Right lobe of liver (tissue), 6 donors: ENCODE measurements at regions of chr2 and their contacts with region 1.

Region 1: DNA sequence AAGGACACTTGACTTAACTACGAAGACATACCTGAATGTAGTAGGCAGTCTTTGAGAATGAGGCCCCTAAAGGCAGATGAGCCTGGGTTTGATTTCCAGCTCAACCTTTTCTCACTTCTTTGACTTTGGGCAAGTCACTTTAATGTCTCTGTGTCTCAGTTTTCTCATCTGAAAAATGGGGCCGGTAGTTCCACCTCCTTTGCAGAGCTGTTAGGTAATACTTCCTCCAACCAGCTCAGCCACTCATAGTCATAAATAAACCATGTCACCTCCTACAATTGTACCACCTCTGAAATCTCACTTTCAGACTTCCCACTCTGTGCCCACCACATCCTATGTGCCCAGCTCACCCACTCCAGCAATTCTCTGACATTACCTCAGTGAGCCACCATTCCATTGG is 10.4 kb downstream of the ARHGAP25 start:
- DNase-seq: no peak
- ATAC-seq: no peak
- H3K4me3 ChIP-seq: no peak overlapping the region
- H3K27ac ChIP-seq: no peak overlapping the region
- H3K4me1 ChIP-seq: no peaks in the 10 kb centered on the region
- H3K27me3 ChIP-seq: no peaks in the 10 kb centered on the region
- CTCF ChIP-seq: no peak
- POLR2A ChIP-seq: no peak

Region 2: GRCh38 chr2:68565858-68566257 is 179.1 kb before region 1 on chr2:
- intact Hi-C with region 1: no loop called
- DNase-seq: no peak
- ATAC-seq: no peak
- H3K4me3 ChIP-seq: no peak overlapping the region
- H3K27ac ChIP-seq: no peak overlapping the region
- H3K4me1 ChIP-seq: no peaks in the 10 kb centered on the region
- H3K27me3 ChIP-seq: no peaks in the 10 kb centered on the region
- CTCF ChIP-seq: no peak
- POLR2A ChIP-seq: no peak

Region 3: DNA sequence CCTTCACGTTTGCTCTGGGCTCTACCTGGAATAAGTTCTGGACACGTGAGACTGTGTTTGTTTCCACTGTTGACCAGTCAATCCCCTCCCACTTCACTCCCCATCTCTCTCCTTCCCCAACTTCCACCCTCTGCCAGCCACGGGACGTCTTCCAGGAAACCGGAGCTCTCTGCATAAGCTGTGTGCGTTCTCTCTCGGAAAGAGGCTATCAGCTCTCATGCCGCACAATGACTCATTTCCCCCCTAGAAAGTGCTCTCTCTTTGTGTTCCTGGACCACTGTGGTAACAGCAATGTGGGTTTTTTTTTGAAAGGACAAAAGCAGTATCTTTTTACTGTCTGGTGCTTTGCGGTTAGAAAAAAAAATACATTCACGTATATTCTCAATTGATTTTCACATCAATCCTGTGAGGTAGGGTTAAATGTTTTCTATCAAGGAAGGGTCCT is 91.4 kb before region 1 on chr2:
- intact Hi-C with region 1: no loop called
- DNase-seq: peak in 1 of 3 donors; percentile 47
- ATAC-seq: peak; percentile 67 to 94 (median 85)
- H3K4me3 ChIP-seq: no peak overlapping the region
- H3K27ac ChIP-seq: no peak overlapping the region
- H3K4me1 ChIP-seq: no peaks in the 10 kb centered on the region
- H3K27me3 ChIP-seq: no peaks in the 10 kb centered on the region
- CTCF ChIP-seq: no peak
- POLR2A ChIP-seq: no peak

Region 4: DNA sequence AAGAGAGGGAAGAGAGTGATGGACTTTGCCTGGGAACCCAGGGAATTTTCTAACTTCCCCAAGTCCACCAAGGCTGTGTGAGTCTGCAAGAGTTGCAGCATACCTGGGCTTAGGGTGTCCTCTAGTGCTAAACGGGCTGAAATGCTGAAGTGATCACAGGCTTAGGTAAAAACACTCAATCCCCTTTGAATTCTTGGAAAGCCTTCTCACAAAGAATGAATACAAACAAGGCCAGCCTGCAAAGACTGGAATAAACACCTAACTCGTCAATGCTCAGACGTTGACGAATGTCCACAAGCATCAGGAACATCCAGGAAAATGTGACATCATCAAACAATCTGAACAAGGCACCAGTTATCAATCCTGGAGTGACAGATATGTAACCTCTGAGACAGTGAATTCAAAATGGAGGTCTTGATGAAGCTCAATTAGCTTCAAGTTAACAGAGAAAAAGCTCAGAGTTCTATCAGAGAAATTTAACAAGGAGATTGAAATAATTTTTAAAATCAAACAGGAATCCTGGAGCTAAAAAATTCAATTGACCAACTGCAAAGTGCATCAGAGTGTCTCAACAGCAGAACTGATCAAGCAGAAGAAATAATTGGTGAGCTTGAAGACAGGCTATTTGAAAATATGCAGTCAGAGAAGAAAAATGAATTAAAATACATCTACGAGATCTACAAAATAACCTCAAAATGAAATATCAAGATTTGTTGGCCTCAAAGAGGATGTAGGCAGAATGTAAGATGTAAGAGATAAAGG is 156.4 kb after region 1 on chr2:
- intact Hi-C with region 1: no loop called
- DNase-seq: no peak
- ATAC-seq: peak in 2 of 4 donors; percentile 64 to 65
- H3K4me3 ChIP-seq: no peak overlapping the region
- H3K27ac ChIP-seq: no peak overlapping the region
- H3K4me1 ChIP-seq: no peaks in the 10 kb centered on the region
- H3K27me3 ChIP-seq: no peaks in the 10 kb centered on the region
- CTCF ChIP-seq: peak in 2 of 4 donors; percentile 18 to 22
- POLR2A ChIP-seq: no peak

Region 5: GRCh38 chr2:68925295-68925896 is 180.4 kb after region 1 on chr2:
- intact Hi-C with region 1: loop called in 1 of 2 experiments (anchors 5 kb)
- DNase-seq: no peak
- ATAC-seq: peak; percentile 79 to 84 (median 83)
- H3K4me3 ChIP-seq: no peak overlapping the region
- H3K27ac ChIP-seq: no peak overlapping the region
- H3K4me1 ChIP-seq: peaks cover 0 to 10% (median 0%) of the 10 kb centered on the region in 4 donors
- H3K27me3 ChIP-seq: no peaks in the 10 kb centered on the region
- CTCF ChIP-seq: peak; percentile 85 to 92 (median 90)
- POLR2A ChIP-seq: no peak

Region 6: GRCh38 chr2:69272803-69273471 is 527.9 kb after region 1 on chr2:
- intact Hi-C with region 1: no loop called
- DNase-seq: peak; percentile 57 to 67 (median 66)
- ATAC-seq: peak; percentile 65 to 97 (median 91)
- H3K4me3 ChIP-seq: no peak overlapping the region
- H3K27ac ChIP-seq: no peak overlapping the region
- H3K4me1 ChIP-seq: no peaks in the 10 kb centered on the region
- H3K27me3 ChIP-seq: no peaks in the 10 kb centered on the region
- CTCF ChIP-seq: peak; percentile 30 to 50 (median 38)
- POLR2A ChIP-seq: no peak